ENCODE measurements at regions of chr22 and their contacts with region 1.

Region 1: GRCh38 chr22:33529424-33530113 is 390.7 kb downstream of the LARGE1 start:
- DNase-seq: no peak
- H3K4me3 ChIP-seq: no peak overlapping the region
- H3K27ac ChIP-seq: no peak overlapping the region
- H3K4me1 ChIP-seq: no peaks in the 10 kb centered on the region
- H3K27me3 ChIP-seq: no peaks in the 10 kb centered on the region
- CTCF ChIP-seq: no peak

Region 2: GRCh38 chr22:33563220-33563964 is 33.8 kb after region 1 on chr22:
- CTCF ChIA-PET with region 1: no interaction called
- dilution Hi-C with region 1: loop called (anchors 5 kb)
- in situ Hi-C with region 1: no loop called
- intact Hi-C with region 1: no loop called
- DNase-seq: no peak
- H3K4me3 ChIP-seq: no peak overlapping the region
- H3K27ac ChIP-seq: no peak overlapping the region
- H3K4me1 ChIP-seq: no peaks in the 10 kb centered on the region
- H3K27me3 ChIP-seq: no peaks in the 10 kb centered on the region
- CTCF ChIP-seq: no peak

Region 3: DNA sequence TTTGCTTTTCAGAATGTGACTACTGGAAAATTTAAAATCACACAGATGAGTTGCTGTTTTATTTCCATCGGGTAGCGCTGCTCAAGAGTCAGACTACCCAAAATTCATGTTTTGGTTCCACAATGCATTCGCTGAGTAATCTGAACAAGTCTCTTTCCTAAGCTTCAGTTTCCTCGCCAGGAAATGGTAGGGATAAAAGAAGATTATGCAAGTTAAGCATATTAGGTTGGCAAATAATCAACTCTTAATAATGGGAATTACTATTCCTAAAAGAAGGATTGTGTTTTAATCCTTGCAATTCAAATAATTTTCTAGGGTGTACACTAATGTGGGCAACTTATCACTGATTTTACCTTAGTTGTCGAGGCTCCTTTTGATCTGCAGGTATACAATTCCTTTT is 64.2 kb after region 1 on chr22:
- CTCF ChIA-PET with region 1: no interaction called
- dilution Hi-C with region 1: loop called (anchors 5 kb)
- in situ Hi-C with region 1: no loop called
- intact Hi-C with region 1: no loop called
- DNase-seq: no peak
- H3K4me3 ChIP-seq: no peak overlapping the region
- H3K27ac ChIP-seq: no peak overlapping the region
- H3K4me1 ChIP-seq: no peaks in the 10 kb centered on the region
- H3K27me3 ChIP-seq: no peaks in the 10 kb centered on the region
- CTCF ChIP-seq: no peak